CD4-positive, alpha-beta T cell (primary cell): ENCODE measurements at regions of chr2 and their contacts with region 1.

Region 1: DNA sequence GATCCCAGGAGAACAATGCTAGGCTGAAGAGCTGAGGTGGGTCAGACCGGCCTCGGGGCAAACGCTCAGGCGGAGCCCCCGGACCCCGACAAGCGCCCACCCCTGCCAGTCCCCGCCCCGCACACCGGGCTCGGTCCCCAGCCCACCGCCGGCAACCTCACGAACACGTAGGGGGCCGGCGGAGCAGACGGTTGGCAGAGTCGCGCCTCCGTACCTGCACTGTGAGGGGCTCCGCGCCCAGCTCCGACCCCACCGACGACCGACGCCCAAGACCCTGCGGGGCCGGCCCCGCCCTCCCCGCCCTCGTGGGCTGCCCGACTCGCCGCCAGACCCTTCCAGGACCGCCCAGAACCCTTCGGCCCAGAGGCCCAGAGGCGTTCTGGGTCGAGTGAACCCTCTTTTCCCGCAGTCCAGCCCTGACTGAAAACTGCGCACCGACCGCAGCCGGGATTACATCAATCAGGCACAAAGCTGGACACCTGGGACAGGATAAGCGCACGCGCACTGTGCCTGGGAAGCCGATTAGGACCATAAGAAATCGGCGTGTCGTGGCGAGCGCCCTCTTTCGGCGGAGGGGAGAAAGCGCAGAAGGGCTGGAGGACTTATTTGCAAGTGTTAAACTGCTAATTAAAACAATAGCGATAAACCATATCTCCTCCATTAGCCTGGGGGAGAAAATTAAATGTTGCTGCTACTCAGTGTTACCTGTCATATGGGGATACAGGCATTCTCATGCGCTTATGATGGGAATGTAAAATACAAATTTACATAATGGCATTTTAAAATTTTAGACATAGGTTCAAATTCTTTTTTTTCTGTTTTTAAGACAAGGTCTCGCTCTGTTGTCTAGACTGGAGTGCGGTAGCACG is 11.7 kb upstream of the DCTN1 start:
- DNase-seq: peak; percentile 92 to 98 (median 96)
- ATAC-seq: peak; percentile 90
- H3K4me3 ChIP-seq: peak overlapping the region; percentile 72
- H3K4me3 Mint-ChIP-seq: peak overlapping the region; percentile 99
- H3K27ac ChIP-seq: peak overlapping the region; percentile 88 to 92
- H3K27ac Mint-ChIP-seq: no peak overlapping the region
- H3K4me1 ChIP-seq: peaks cover 34% of the 10 kb centered on the region
- H3K4me1 Mint-ChIP-seq: peaks cover 9% of the 10 kb centered on the region
- H3K27me3 ChIP-seq: peaks cover 0 to 5% of the 10 kb centered on the region in 2 experiments
- H3K27me3 Mint-ChIP-seq: no peaks in the 10 kb centered on the region
- CTCF ChIP-seq: peak; percentile 99

Region 2: GRCh38 chr2:74178201-74179062 is 213.4 kb before region 1 on chr2 and contains the start of gene MOB1A:
- CTCF ChIA-PET with region 1: no interaction called
- POLR2A ChIA-PET with region 1: interaction called, 12 read pairs
- intact Hi-C with region 1: loop called in 1 of 2 experiments (anchors 5 kb)
- DNase-seq: peak; percentile 93 to 99 (median 97)
- ATAC-seq: peak; percentile 95
- H3K4me3 ChIP-seq: peak within 1 kb of the TSS; percentile 62
- H3K4me3 Mint-ChIP-seq: peak within 1 kb of the TSS; percentile 95
- H3K27ac ChIP-seq: peak within 1 kb of the TSS; percentile 89 to 96
- H3K27ac Mint-ChIP-seq: peak within 1 kb of the TSS; percentile 91
- H3K4me1 ChIP-seq: peaks cover 35% of the 10 kb centered on the region
- H3K4me1 Mint-ChIP-seq: peaks cover 39% of the 10 kb centered on the region
- H3K27me3 ChIP-seq: no peaks in the 10 kb centered on the region
- H3K27me3 Mint-ChIP-seq: no peaks in the 10 kb centered on the region
- CTCF ChIP-seq: no peak
- total RNA-seq, gene MOB1A: 150 to 159 TPM

Region 3: GRCh38 chr2:74250189-74250631 is 141.6 kb before region 1 on chr2:
- CTCF ChIA-PET with region 1: no interaction called
- POLR2A ChIA-PET with region 1: interaction called, 6 read pairs
- intact Hi-C with region 1: loop called (anchors 1 to 5 kb)
- DNase-seq: peak; percentile 27 to 79 (median 46)
- ATAC-seq: peak; percentile 56
- H3K4me3 ChIP-seq: no peak overlapping the region
- H3K4me3 Mint-ChIP-seq: no peak overlapping the region
- H3K27ac ChIP-seq: no peak overlapping the region
- H3K27ac Mint-ChIP-seq: no peak overlapping the region
- H3K4me1 ChIP-seq: peaks cover 5% of the 10 kb centered on the region
- H3K4me1 Mint-ChIP-seq: no peaks in the 10 kb centered on the region
- H3K27me3 ChIP-seq: no peaks in the 10 kb centered on the region
- H3K27me3 Mint-ChIP-seq: no peaks in the 10 kb centered on the region
- CTCF ChIP-seq: peak; percentile 84

Region 4: DNA sequence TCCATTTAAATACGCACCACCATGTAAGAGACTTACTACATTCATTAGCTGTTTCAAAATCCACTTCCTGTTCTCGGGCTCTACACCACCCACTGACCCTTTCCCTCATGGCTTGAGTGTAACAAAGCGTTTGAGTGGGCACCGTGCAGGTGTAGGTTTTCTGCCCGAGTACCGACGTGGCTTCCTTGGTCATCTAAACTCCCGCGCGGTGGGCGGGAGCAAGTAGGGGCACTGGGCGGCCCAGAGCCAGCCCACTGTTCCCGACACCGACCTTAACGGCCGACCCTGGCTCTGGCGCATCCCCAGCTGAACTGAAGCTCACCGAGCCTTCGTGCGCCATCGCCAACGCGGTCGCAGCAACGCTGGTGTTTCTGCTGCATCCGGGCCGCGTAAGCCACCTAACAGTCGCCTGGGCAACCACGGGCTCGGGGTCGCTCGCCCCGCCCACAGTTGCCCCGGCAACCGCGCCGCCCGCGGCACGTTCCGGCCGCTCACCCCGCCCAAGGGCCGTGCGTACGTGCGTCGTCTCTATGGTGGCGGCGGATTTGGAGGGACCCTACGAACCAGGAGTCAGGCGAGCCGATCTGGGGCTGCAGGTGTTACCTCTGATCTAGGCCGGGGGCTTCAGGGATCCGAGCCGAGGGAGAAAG is 29.5 kb after region 1 on chr2 and contains the starts of genes C2orf81 and WDR54:
- CTCF ChIA-PET with region 1: interaction called, 7 read pairs
- POLR2A ChIA-PET with region 1: interaction called, 15 read pairs
- intact Hi-C with region 1: no loop called
- DNase-seq: peak; percentile 85 to 97 (median 94)
- ATAC-seq: peak; percentile 82
- H3K4me3 ChIP-seq: peak within 1 kb of the TSS; percentile 98
- H3K4me3 Mint-ChIP-seq: peak within 1 kb of the TSS; percentile 100
- H3K27ac ChIP-seq: peak within 1 kb of the TSS; percentile 82 to 98
- H3K27ac Mint-ChIP-seq: peak within 1 kb of the TSS; percentile 96
- H3K4me1 ChIP-seq: peaks cover 20% of the 10 kb centered on the region
- H3K4me1 Mint-ChIP-seq: peaks cover 39% of the 10 kb centered on the region
- H3K27me3 ChIP-seq: no peaks in the 10 kb centered on the region
- H3K27me3 Mint-ChIP-seq: no peaks in the 10 kb centered on the region
- CTCF ChIP-seq: no peak
- total RNA-seq, gene C2orf81: 2.9 to 3.4 TPM
- total RNA-seq, gene WDR54: 21.7 to 25.1 TPM

Region 5: DNA sequence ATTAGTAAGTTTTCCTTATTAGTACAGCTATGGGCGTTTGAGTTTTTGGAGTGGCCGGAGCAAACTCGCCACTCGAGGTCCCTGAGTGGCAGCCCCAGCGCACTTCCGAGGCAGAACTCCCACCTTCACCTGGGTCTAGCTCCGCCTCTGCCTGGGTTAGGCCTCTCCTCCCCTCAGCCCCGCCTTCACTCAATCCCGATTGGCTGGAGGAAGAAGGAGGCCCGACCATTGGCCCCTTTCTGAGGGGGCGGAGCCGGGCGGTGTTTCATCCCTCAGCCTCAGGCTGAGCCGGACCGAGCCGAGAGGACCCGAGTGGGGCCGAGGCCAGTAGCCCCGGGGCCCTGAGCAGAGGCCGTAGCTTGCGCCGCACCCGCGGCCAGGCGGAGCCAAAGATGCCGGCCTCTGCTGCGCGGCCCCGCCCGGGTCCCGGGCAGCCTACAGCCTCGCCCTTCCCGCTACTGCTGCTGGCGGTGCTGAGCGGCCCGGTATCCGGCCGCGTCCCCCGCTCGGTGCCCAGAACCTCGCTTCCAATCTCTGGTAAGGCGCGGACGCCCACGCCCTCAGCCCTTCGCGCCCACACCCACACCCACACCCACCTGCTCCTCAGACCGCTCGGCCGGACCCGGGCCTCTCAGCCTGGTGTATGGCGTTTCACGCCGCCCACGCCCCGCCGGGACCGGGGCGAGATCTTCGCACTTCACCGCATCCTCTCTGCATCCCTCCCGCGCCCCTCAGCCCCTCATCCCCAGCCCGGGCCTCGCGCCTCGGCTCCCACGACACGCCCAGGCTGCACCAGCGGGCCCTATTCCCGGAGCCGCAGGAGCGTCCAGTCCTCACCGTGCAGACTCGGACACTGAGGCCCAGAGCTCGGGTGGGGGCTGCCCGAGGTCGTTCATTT is 262.4 kb after region 1 on chr2 and contains the start of gene SEMA4F:
- CTCF ChIA-PET with region 1: no interaction called
- POLR2A ChIA-PET with region 1: no interaction called
- intact Hi-C with region 1: loop called in 1 of 2 experiments (anchors 10 kb)
- DNase-seq: peak; percentile 83 to 96 (median 92)
- ATAC-seq: peak; percentile 99
- H3K4me3 ChIP-seq: peak within 1 kb of the TSS; percentile 80
- H3K4me3 Mint-ChIP-seq: peak within 1 kb of the TSS; percentile 88
- H3K27ac ChIP-seq: no peak within 1 kb of the TSS
- H3K27ac Mint-ChIP-seq: peak within 1 kb of the TSS; percentile 80
- H3K4me1 ChIP-seq: peaks cover 18% of the 10 kb centered on the region
- H3K4me1 Mint-ChIP-seq: peaks cover 26% of the 10 kb centered on the region
- H3K27me3 ChIP-seq: peaks cover 2 to 5% of the 10 kb centered on the region in 2 experiments
- H3K27me3 Mint-ChIP-seq: peaks cover 14% of the 10 kb centered on the region
- CTCF ChIP-seq: no peak
- total RNA-seq, gene SEMA4F: 6.8 to 7.3 TPM

Region 6: GRCh38 chr2:74740389-74741075 is 348.7 kb after region 1 on chr2:
- CTCF ChIA-PET with region 1: no interaction called
- POLR2A ChIA-PET with region 1: no interaction called
- intact Hi-C with region 1: no loop called
- DNase-seq: peak in 2 of 14 experiments; percentile 64 to 76
- ATAC-seq: no peak
- H3K4me3 ChIP-seq: no peak overlapping the region
- H3K4me3 Mint-ChIP-seq: no peak overlapping the region
- H3K27ac ChIP-seq: no peak overlapping the region
- H3K27ac Mint-ChIP-seq: no peak overlapping the region
- H3K4me1 ChIP-seq: no peaks in the 10 kb centered on the region
- H3K4me1 Mint-ChIP-seq: no peaks in the 10 kb centered on the region
- H3K27me3 ChIP-seq: no peaks in the 10 kb centered on the region
- H3K27me3 Mint-ChIP-seq: peaks cover 7% of the 10 kb centered on the region
- CTCF ChIP-seq: no peak